ENCODE measurements at regions of chr2 and their contacts with region 1.

Region 1: GRCh38 chr2:179218848-179219594 is 45.6 kb downstream of the SESTD1 start:
- DNase-seq: no peak
- H3K4me3 ChIP-seq: no peak overlapping the region
- H3K27ac ChIP-seq: no peak overlapping the region
- H3K4me1 ChIP-seq: peaks cover 0 to 37% (median 6%) of the 10 kb centered on the region in 6 donors
- H3K27me3 ChIP-seq: no peaks in the 10 kb centered on the region
- CTCF ChIP-seq: peak; percentile 48 to 86 (median 76)
- POLR2A ChIP-seq: no peak

Region 2: DNA sequence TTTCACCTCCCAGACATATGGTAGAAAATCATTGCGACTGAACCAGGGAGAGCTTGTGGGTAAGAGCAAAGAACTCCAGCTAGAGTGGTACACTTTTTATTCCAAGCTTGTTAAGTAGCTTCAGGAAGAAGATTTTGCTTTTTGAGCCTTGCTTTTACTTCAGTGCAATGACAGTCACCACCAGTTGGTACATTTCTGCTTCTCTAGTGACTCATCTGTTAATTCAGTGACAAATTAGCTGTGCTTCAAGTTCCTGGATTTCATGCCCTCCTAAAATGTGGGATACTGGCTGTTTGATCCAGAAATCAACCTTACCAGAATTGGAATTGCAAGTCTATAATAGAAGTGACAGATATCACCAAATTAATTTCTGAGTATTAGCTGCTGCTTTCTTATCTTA is 294.2 kb before region 1 on chr2:
- intact Hi-C with region 1: no loop called
- DNase-seq: no peak
- H3K4me3 ChIP-seq: no peak overlapping the region
- H3K27ac ChIP-seq: no peak overlapping the region
- H3K4me1 ChIP-seq: no peaks in the 10 kb centered on the region
- H3K27me3 ChIP-seq: no peaks in the 10 kb centered on the region
- CTCF ChIP-seq: no peak
- POLR2A ChIP-seq: no peak

Region 3: GRCh38 chr2:179340668-179341067 is 121.6 kb after region 1 on chr2:
- intact Hi-C with region 1: loop called (anchors 5 kb)
- DNase-seq: no peak
- H3K4me3 ChIP-seq: no peak overlapping the region
- H3K27ac ChIP-seq: no peak overlapping the region
- H3K4me1 ChIP-seq: peaks cover 0 to 7% (median 0%) of the 10 kb centered on the region in 6 donors
- H3K27me3 ChIP-seq: no peaks in the 10 kb centered on the region
- CTCF ChIP-seq: peak in 5 of 11 experiments; percentile 16 to 49 (median 29)
- POLR2A ChIP-seq: no peak

Region 4: DNA sequence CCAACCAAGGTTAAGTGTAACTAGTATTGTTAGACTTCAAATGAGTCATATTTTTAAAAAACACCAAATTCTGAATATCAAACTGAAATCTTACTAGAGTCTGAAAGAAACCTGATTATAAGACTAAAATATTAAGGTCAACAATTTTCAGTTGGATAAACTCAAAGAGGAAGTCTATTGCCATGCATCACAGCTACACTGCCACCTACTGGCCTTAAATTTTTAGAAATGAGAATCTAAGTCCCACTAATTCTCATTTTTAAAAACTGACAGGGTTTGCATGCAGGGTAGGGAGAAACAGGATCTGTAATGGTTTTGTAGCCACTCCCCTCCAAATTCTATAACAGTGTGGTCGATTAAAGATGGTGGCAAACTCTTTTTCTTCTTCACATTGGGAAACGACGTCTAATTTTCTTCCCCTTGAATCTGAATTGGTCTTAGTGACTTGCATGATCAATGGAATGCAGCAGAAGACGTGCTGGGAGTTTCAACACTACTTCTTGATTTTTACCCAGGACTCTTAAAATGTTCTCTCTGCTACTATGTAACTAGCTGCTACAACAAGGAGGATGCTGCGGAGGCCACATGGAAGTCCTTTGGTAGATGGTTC is 221.7 kb after region 1 on chr2:
- intact Hi-C with region 1: loop called (anchors 5 kb)
- DNase-seq: no peak
- H3K4me3 ChIP-seq: no peak overlapping the region
- H3K27ac ChIP-seq: no peak overlapping the region
- H3K4me1 ChIP-seq: no peaks in the 10 kb centered on the region
- H3K27me3 ChIP-seq: peaks cover 0 to 4% (median 0%) of the 10 kb centered on the region in 7 donors
- CTCF ChIP-seq: peak in 9 of 11 experiments; percentile 19 to 65 (median 60)
- POLR2A ChIP-seq: no peak

Region 5: DNA sequence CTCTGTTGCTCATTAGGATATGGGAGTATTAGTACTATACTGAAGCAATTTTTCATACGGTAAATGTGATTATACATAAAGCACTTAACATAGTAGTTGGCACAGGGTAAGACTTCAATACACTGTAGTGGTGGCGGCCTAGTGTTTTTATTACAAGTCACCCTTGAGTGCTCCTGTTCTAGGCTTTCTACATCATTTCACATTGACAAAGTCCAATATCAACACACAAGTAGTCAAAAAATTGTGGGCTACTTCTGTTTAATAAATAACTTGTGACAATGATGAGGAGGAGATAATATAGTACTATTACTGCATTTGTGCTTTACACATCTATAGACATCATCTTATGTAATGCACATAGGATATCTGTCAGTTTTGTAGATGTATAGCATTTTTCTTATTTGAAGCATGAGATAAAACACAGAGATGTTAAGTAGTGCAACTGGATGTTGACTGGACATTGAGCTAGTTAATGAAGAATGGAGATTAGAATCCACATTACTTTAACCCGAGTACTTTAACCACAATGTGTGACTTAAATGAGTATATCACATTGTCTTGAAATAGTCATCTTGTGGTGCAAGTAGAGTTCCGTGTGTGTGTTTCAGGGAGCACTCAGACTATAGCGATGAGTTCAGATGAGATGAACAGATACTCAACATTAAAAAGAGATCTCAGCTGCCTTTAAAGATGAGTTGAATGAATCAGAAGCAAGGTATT is 507.6 kb after region 1 on chr2:
- intact Hi-C with region 1: no loop called
- DNase-seq: no peak
- H3K4me3 ChIP-seq: no peak overlapping the region
- H3K27ac ChIP-seq: no peak overlapping the region
- H3K4me1 ChIP-seq: no peaks in the 10 kb centered on the region
- H3K27me3 ChIP-seq: no peaks in the 10 kb centered on the region
- CTCF ChIP-seq: no peak
- POLR2A ChIP-seq: no peak